ENCODE measurements at regions of chr9 and their contacts with region 1.

Region 1: DNA sequence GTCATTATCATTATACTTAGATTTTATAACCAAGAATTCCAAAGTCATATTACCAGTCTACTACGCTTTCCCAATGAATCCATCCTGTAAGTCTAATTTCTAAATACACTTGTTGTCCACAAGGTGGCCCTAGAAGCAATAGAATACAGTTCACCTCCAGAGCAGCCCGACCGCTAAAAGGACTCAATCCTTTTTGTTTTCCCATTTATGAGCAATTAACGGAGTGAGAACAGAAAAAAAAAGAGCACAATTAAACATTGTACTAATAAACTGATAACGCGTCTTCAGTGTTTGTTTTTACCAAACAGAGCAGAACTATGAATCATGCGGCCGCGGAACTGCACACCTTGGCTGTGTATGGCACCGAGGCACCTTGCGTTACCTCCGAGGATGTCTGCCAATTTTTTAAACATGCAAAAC is 160.7 kb upstream of the DAPK1 start:
- DNase-seq: no peak
- H3K4me3 ChIP-seq: peak overlapping the region; percentile 11 to 61 (median 43); a peak in 5 of 8 replicates
- H3K27ac ChIP-seq: no peak overlapping the region
- H3K4me1 ChIP-seq: peaks cover 3 to 14% (median 13%) of the 10 kb centered on the region in 4 experiments; a peak in 6 of 7 replicates
- H3K27me3 ChIP-seq: no peaks in the 10 kb centered on the region; a peak in 2 of 7 replicates
- CTCF ChIP-seq: peak in 2 of 3 experiments; percentile 64 to 65; a peak in 3 of 4 replicates
- EP300 ChIP-seq: no peak
- POLR2A ChIP-seq: no peak
- RAD21 ChIP-seq: peak; percentile 89

Region 2: GRCh38 chr9:87405677-87406542 is 69.0 kb after region 1 on chr9:
- CTCF ChIA-PET with region 1: interaction called, 5 read pairs
- POLR2A ChIA-PET with region 1: interaction called, 16 read pairs
- DNase-seq: no peak
- H3K4me3 ChIP-seq: peak overlapping the region in 1 of 4 experiments; percentile 32; a peak in 2 of 8 replicates
- H3K27ac ChIP-seq: peak overlapping the region; percentile 35; the same call in 1 of the 2 replicates
- H3K4me1 ChIP-seq: peaks cover 6 to 42% (median 32%) of the 10 kb centered on the region in 4 experiments
- H3K27me3 ChIP-seq: no peaks in the 10 kb centered on the region
- CTCF ChIP-seq: no peak
- EP300 ChIP-seq: no peak
- POLR2A ChIP-seq: no peak
- RAD21 ChIP-seq: no peak

Region 3: GRCh38 chr9:87497604-87498045 is 160.7 kb after region 1 on chr9 and contains the start of gene DAPK1:
- CTCF ChIA-PET with region 1: interaction called, 10 read pairs
- POLR2A ChIA-PET with region 1: interaction called, 11 read pairs
- DNase-seq: peak in 1 of 2 experiments; percentile 86
- H3K4me3 ChIP-seq: peak within 1 kb of the TSS; percentile 65 to 83 (median 76)
- H3K27ac ChIP-seq: peak within 1 kb of the TSS; percentile 58; the same call in 1 of the 2 replicates
- H3K4me1 ChIP-seq: peaks cover 0 to 2% (median 0%) of the 10 kb centered on the region in 4 experiments; a peak in 1 of 7 replicates
- H3K27me3 ChIP-seq: no peaks in the 10 kb centered on the region
- CTCF ChIP-seq: peak; percentile 5 to 27 (median 18); a peak in 3 of 4 replicates
- EP300 ChIP-seq: no peak
- POLR2A ChIP-seq: no peak
- RAD21 ChIP-seq: no peak; a peak in 1 of 4 replicates
- total RNA-seq, gene DAPK1: 128 and 131 TPM in 2 replicates